Motor neuron (in vitro differentiated cells): ENCODE measurements at regions of chr3 and their contacts with region 1.

Region 1: GRCh38 chr3:51371943-51372557 is 13.0 kb upstream of the MANF start:
- ATAC-seq: peak in 7 of 8 experiments; percentile 32 to 84 (median 76)
- H3K4me3 ChIP-seq: no peak overlapping the region
- H3K27ac ChIP-seq: no peak overlapping the region
- H3K4me1 ChIP-seq: no peaks in the 10 kb centered on the region

Region 2: DNA sequence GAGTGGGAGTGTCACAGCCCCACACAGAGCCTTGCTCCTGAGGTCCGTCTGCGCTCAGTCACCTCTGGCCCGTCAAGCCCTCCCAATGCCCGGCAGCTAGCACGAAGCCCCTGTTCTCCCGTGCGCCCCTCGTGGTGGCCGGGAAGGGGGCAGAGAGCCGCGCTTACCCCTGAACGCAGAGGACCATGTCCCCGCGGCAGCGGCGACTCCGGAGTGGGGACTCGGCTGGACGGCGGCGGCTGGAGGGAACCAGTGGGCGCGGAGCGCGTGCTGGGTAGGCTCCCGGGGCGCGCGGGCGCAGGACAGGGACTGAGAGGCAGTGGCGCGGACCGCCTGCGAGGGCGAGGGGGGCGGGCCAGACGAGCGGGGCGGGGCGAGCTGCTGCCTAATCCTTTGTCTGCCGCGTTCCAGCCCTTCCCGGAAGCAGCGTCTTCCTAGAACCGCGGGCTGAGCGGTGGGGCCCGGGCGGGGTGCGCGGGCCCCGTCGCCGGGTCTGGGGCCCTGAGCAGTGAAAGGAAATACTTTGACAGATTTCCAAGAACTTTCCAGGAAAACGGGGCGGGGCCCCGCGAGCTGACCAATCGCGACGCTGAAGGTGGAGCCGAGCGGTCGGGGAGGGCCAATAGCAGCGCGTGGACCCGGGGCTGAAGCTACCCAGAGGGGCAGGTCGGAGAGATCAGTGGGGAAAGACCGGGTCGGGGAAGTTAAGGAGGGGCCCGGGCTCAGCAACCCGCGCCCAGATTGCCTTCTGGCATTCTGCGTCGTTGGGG is 760.4 kb before region 1 on chr3 and contains the start of gene CISH:
- in situ Hi-C with region 1: loop called in 8 of 9 experiments (anchors 25 kb)
- ATAC-seq: peak; percentile 73 to 85 (median 82)
- H3K4me3 ChIP-seq: peak within 1 kb of the TSS; percentile 35 to 66 (median 47)
- H3K27ac ChIP-seq: peak within 1 kb of the TSS in 1 of 2 donors; percentile 15
- H3K4me1 ChIP-seq: peaks cover 6 to 9% of the 10 kb centered on the region in 2 donors
- total RNA-seq, gene CISH: 0.76 to 5.2 (median 1.8) TPM

Region 3: DNA sequence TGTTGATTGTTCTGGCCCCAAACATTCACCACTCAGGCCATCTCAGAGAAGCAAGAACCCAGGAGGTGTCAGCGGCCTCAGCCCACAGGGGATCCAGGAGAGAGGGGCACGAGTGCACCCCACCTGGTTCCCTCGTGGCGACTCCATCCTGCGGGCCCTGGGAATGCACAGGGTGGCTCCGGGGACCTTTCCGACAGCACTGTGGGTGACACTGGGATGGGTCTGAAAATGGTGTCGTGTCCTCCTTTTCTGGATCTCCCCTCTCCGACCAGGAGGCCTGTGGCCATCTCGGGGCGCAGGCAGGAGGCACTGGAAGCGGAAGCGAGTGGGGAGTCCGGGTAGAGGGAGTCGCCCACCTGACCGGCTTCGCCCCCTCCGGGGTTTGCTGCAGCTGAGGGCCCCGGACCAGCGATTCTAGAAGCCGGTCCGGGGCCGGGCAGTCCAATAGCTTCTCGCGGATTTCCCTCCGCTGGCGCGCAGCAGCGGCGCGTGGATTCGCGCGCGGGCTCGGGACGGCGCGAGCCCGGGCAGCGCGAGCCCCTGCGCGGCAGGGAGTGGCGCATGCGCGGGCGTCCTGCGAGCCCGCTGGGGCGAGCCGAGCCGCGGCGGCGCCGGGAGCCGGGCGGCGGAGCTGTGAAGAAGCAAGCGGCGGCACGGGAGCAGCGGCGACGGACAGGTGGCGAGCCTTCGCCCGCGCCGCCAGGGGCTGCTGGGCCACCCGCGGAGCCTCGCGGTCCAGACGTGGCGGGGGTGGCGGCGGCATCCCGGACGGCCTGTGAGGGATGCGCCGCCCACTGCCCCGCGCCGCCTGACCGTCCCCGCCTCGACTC is 697.5 kb before region 1 on chr3 and contains the start of gene DOCK3:
- in situ Hi-C with region 1: loop called in 1 of 9 experiments (anchors 25 kb)
- ATAC-seq: peak; percentile 85 to 93 (median 86)
- H3K4me3 ChIP-seq: peak within 1 kb of the TSS; percentile 61 to 97 (median 71)
- H3K27ac ChIP-seq: peak within 1 kb of the TSS; percentile 77 to 84
- H3K4me1 ChIP-seq: peaks cover 0 to 13% of the 10 kb centered on the region in 2 donors
- total RNA-seq, gene DOCK3: 1.0 to 17.3 (median 9.7) TPM

Region 4: GRCh38 chr3:50971487-50971924 is 400.5 kb before region 1 on chr3:
- in situ Hi-C with region 1: loop called in 1 of 9 experiments (anchors 25 kb)
- ATAC-seq: peak in 5 of 8 experiments; percentile 13 to 94 (median 83)
- H3K4me3 ChIP-seq: no peak overlapping the region
- H3K27ac ChIP-seq: no peak overlapping the region
- H3K4me1 ChIP-seq: no peaks in the 10 kb centered on the region

Region 5: DNA sequence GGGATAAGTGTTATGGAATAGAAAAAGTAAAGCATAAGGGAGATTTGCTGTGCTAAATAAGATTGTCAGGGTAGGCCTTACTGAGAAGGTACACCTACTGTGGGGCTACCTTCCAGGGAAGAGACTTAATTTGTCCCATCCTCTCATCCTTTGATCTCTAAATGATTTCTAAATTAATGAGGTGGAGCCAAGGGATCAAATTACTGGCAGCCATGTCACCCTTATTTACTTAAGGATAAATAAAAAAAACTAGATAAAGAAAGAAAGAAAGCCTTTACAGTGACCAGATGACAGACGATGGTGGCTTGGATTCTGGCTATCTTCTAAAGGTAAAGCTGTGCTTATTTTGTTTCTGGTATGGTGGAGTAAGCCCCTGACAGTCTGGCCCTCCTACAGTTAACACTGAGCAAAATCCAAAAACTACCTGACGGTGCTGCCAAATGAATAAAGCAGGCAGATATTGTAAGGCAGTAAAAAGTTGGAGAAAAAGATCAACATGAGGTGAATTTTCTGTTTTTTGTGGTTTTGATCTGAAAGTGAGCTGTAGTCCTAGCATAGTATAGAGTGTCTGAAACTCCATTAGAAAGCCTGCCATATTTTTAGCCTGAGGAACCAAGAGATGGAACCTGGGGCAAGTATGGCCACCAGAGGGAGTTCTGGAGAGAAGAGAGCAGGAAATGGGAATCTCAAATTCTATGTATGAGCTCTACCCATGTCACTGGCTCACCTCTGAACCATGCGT is 272.1 kb before region 1 on chr3:
- in situ Hi-C with region 1: loop called in 2 of 9 experiments (anchors 10 to 25 kb)
- ATAC-seq: peak in 4 of 8 experiments; percentile 47 to 96 (median 92)
- H3K4me3 ChIP-seq: no peak overlapping the region
- H3K27ac ChIP-seq: no peak overlapping the region
- H3K4me1 ChIP-seq: peaks cover 0 to 3% of the 10 kb centered on the region in 2 donors